CD8-positive, alpha-beta T cell (primary cell): ENCODE measurements at regions of chr21 and their contacts with region 1.

Region 1: DNA sequence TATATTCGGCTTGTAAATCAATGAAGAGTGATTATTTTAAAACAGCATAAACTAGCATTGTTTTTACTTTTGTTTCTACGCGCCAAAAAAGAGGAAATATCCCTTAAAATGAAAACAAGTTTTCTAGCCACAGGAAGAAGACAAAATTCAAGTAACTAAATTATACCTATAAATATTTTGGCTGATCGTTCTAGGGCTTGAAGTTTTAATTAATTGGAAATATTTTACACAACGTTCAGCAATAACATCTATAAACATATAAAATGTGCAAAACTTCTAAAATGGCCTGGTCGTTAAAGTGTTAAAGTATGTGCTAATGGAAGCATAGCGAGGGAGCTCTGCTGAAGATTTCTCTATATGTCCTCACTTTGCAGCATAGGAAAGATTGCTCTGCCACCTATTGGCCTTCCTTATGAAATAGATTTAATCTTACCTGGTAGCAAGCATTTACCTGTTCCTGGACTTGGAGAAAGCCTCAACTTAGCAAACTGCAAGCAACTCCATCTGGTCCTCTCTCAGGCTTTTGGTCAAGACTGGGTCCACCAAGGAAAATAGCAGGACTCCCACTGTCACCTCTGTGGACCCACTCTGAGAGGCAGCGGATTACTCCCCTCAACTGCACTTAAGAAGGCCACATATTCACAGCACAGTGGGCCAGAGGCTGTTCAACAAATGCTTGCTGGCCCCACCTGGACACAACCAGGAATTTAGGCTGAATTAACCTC is 351.3 kb upstream of the RUNX1 start:
- DNase-seq: peak in 8 of 9 experiments; percentile 2 to 81 (median 34)
- ATAC-seq: peak; percentile 89
- H3K4me3 ChIP-seq: no peak overlapping the region
- H3K4me3 Mint-ChIP-seq: no peak overlapping the region
- H3K27ac ChIP-seq: no peak overlapping the region
- H3K27ac Mint-ChIP-seq: no peak overlapping the region
- H3K4me1 ChIP-seq: no peaks in the 10 kb centered on the region
- H3K4me1 Mint-ChIP-seq: no peaks in the 10 kb centered on the region
- H3K27me3 ChIP-seq: no peaks in the 10 kb centered on the region
- H3K27me3 Mint-ChIP-seq: no peaks in the 10 kb centered on the region
- CTCF ChIP-seq: peak; percentile 67

Region 2: GRCh38 chr21:34801519-34802132 is 598.8 kb before region 1 on chr21:
- CTCF ChIA-PET with region 1: interaction called, 6 read pairs
- POLR2A ChIA-PET with region 1: no interaction called
- intact Hi-C with region 1: loop called (anchors 1 to 2 kb)
- DNase-seq: peak in 4 of 9 experiments; percentile 25 to 60 (median 39)
- ATAC-seq: peak; percentile 46
- H3K4me3 ChIP-seq: no peak overlapping the region
- H3K4me3 Mint-ChIP-seq: no peak overlapping the region
- H3K27ac ChIP-seq: peak overlapping the region in 1 of 2 experiments; percentile 47
- H3K27ac Mint-ChIP-seq: peak overlapping the region; percentile 25
- H3K4me1 ChIP-seq: no peaks in the 10 kb centered on the region
- H3K4me1 Mint-ChIP-seq: peaks cover 26% of the 10 kb centered on the region
- H3K27me3 ChIP-seq: no peaks in the 10 kb centered on the region
- H3K27me3 Mint-ChIP-seq: no peaks in the 10 kb centered on the region
- CTCF ChIP-seq: no peak